Naive thymus-derived CD4-positive, alpha-beta T cell (primary cell): ENCODE measurements at regions of chr12 and their contacts with region 1.

Region 1: DNA sequence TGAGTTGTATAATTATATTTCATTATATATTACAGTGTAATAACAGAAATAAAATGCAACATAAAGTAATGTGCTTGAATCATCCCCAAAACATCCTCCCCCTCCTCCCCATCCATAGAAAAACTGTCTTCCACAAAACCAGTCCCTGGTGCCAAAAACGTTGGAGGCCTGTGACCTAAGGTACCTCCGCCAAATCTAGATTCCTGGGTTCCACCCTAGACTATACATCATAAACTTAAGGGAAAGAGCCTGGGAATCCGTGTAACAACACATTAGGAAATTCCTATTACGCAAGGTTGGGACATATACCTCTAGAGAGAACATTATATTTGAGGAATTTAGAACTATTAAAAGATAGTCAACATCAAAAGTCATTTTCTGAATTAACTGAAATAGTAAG is 38.0 kb downstream of the SPPL3 start:
- DNase-seq: no peak
- ATAC-seq: no peak
- H3K4me3 ChIP-seq: no peak overlapping the region
- H3K4me3 Mint-ChIP-seq: no peak overlapping the region
- H3K27ac ChIP-seq: no peak overlapping the region
- H3K27ac Mint-ChIP-seq: peak overlapping the region in 1 of 9 donors; percentile 18
- H3K4me1 ChIP-seq: peaks cover 0 to 2% of the 10 kb centered on the region in 2 donors
- H3K4me1 Mint-ChIP-seq: peaks cover 17 to 57% (median 47%) of the 10 kb centered on the region in 7 donors
- H3K27me3 ChIP-seq: no peaks in the 10 kb centered on the region
- H3K27me3 Mint-ChIP-seq: no peaks in the 10 kb centered on the region

Region 2: DNA sequence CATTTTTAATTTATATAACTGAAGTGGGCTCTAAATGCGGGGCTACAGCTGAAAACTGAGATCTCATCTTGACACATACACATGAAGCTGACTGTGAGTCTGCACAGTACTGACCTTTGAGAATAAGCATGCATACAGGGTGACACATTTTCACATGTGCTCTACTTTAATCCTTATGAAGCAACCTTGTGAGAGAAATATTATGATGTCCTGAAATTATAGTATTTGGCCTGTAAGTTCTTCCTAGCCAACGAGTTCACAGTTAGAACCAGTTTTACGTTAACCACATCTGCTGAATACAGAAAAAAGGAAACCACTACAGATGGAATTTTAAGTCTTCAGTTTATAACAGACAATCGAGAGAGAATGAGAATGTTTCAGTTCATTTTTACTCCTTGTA is 32.3 kb before region 1 on chr12:
- CTCF ChIA-PET with region 1: no interaction called
- POLR2A ChIA-PET with region 1: no interaction called
- intact Hi-C with region 1: loop called in 1 of 2 experiments (anchors 5 kb)
- DNase-seq: no peak
- ATAC-seq: no peak
- H3K4me3 ChIP-seq: no peak overlapping the region
- H3K4me3 Mint-ChIP-seq: peak overlapping the region in 4 of 10 donors; percentile 14 to 78 (median 46)
- H3K27ac ChIP-seq: no peak overlapping the region
- H3K27ac Mint-ChIP-seq: peak overlapping the region in 2 of 9 donors; percentile 3 to 10
- H3K4me1 ChIP-seq: peaks cover 0 to 40% of the 10 kb centered on the region in 2 donors
- H3K4me1 Mint-ChIP-seq: peaks cover 31 to 85% (median 67%) of the 10 kb centered on the region in 7 donors
- H3K27me3 ChIP-seq: no peaks in the 10 kb centered on the region
- H3K27me3 Mint-ChIP-seq: no peaks in the 10 kb centered on the region